T-cell (primary cell): ENCODE measurements at regions of chr16 and their contacts with region 1.

Region 1: DNA sequence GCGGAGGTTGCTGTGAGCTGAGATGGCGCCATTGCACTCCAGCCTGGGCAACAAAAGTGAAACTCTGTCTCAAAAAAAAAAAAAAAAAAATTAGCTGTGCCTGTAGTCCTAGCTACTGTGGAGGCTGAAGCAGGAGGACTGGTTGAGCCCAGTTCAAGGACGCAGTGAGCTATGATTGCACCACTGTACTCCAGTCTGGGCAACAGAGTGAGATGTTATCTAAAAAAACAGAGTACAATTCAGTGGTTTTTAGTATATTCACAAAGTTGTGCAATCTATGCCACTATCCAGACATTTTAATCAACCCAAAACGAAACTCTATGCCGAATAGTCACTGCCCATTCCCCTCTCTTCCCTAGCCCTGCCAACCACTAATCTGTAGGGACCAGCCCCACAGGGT is 25.1 kb downstream of the C16orf54 start:
- DNase-seq: no peak
- ATAC-seq: no peak
- H3K4me3 ChIP-seq: no peak overlapping the region
- H3K4me3 Mint-ChIP-seq: no peak overlapping the region
- H3K27ac ChIP-seq: no peak overlapping the region
- H3K27ac Mint-ChIP-seq: no peak overlapping the region
- H3K4me1 ChIP-seq: peaks cover 0 to 8% of the 10 kb centered on the region in 2 experiments
- H3K4me1 Mint-ChIP-seq: peaks cover 18 to 21% (median 18%) of the 10 kb centered on the region in 3 donors
- H3K27me3 ChIP-seq: no peaks in the 10 kb centered on the region
- H3K27me3 Mint-ChIP-seq: no peaks in the 10 kb centered on the region

Region 2: DNA sequence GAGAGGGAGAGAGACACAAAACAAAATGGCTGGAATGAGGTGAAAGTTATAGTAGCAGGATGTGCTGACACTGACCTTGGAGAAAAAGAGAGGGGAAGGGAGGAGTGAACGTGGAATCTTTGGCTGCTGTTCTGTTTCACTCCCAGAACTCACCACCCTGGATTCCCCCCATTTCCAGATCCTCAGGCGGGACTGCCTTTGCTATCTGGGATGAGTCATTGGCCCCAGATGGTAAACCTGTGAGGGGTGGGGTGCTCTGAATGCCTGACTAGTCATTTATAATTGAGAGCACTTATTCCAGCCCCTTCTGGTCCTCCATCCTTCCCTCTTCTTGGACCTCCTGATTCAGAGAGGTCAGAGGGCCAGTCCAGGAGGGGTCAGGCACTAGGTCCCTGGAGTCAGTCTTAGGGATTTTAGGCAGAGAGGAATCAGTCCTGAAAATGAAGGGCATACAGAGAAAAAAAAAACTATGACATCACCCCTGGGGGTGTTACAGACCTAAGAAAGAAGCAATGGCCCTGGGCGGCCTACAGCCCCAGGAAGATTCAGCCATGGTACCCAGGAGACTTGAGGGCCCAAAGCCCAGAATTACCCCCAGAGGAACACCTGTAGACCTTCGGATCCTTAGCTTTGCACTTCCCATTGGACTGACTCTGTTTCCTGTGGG is 55.2 kb after region 1 on chr16:
- CTCF ChIA-PET with region 1: no interaction called
- POLR2A ChIA-PET with region 1: no interaction called
- DNase-seq: no peak
- ATAC-seq: no peak
- H3K4me3 ChIP-seq: no peak overlapping the region
- H3K4me3 Mint-ChIP-seq: no peak overlapping the region
- H3K27ac ChIP-seq: no peak overlapping the region
- H3K27ac Mint-ChIP-seq: no peak overlapping the region
- H3K4me1 ChIP-seq: no peaks in the 10 kb centered on the region
- H3K4me1 Mint-ChIP-seq: peaks cover 5 to 26% (median 6%) of the 10 kb centered on the region in 3 donors
- H3K27me3 ChIP-seq: peaks cover 0 to 3% of the 10 kb centered on the region in 2 experiments
- H3K27me3 Mint-ChIP-seq: no peaks in the 10 kb centered on the region

Region 3: DNA sequence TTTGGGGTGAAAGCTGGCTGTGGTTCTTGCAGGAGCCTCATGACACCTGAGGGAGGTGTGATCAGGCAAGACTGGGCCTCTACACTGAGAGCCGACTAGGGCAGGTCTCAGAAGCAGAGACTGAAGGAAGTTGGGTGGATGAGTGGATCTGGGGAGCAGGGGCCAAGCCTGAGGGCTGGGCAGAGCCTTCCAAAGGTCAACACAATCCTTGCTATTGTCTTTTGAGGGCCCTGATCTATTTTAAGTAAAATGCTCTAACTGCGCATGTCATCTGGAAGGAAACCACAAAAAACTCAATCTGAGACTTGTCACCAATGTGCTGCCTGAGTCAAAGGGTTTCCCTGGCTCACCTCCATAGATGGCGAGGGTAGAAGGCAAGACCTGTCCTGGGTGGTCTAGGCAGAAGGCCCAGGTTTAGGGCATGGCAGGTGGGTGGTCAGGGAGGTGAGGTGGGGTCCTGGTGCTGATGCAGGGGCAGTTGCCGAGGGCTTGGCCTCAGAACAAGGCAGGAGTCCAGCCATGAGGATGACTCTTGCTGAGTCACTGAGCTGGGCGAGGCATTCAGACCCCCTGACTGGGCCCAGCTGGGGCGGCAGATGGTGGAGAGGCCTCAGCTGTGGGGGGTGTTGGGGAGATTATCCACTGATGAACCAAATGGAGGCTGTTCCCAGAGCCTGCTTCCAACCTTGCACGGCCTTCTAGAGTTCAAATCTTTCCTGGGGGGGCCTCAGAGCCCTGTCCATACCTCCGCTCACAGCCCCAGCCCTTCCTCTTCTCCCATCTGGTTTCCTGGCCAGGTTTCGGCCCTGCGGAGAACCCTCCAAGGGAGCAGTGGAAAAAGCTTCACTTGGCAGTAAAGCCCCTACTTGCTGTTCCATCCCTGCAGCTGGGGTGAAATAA is 104.7 kb after region 1 on chr16:
- CTCF ChIA-PET with region 1: interaction called in 1 of 2 experiments, 3 read pairs
- POLR2A ChIA-PET with region 1: interaction called in 1 of 2 experiments, 10 read pairs
- DNase-seq: peak in 4 of 35 experiments; percentile 22 to 55 (median 30)
- ATAC-seq: peak in 3 of 4 experiments; percentile 22 to 25 (median 24)
- H3K4me3 ChIP-seq: no peak overlapping the region
- H3K4me3 Mint-ChIP-seq: peak overlapping the region; percentile 46 to 79 (median 47)
- H3K27ac ChIP-seq: peak overlapping the region; percentile 46
- H3K27ac Mint-ChIP-seq: peak overlapping the region; percentile 96
- H3K4me1 ChIP-seq: peaks cover 45 to 97% of the 10 kb centered on the region in 2 experiments
- H3K4me1 Mint-ChIP-seq: peaks cover 71 to 94% (median 85%) of the 10 kb centered on the region in 3 donors
- H3K27me3 ChIP-seq: no peaks in the 10 kb centered on the region
- H3K27me3 Mint-ChIP-seq: no peaks in the 10 kb centered on the region